HepG2 (cell line): ENCODE measurements at regions of chr10 and their contacts with region 1.

Region 1: DNA sequence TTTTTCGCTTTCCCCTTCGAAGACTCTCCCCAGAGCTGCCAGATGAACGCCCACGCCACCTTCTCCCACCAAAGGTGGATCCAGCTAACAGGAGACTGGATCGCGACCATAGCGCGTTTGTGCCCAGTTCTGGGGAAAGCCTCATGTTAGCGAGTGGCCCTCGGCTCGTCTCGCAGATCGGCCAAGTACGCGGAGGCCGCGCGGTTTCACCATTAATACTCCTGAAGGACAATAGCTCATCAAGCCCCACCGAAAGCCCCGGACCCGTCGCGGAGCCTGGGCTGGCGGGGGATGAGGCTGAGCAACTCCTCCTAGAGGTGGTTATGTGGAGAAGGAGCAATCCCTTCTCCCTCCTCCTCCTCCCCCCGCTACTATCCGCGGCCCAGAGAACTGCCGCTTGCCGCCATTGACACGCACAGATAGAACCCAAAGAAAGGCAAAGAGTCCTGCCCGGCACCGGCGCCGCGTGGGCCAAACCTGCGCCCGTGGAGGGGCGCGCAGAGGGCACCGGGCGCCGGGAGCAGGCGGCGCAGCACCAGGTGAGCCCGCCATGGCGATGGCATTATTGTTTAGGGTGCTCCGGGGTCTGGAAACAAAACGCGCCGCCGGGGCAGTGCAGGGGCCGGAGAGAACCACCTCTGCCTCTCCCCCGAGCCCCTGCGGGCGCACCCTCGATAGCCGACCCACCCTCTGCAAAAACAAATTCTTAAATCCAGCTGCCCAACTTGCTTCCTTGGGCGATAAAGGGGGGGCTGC is at the start of gene MACROH2A2:
- DNase-seq: peak; percentile 63
- ATAC-seq: peak; percentile 90
- H3K4me3 ChIP-seq: peak within 1 kb of the TSS; percentile 85 to 87 (median 85)
- H3K27ac ChIP-seq: peak within 1 kb of the TSS; percentile 75
- H3K4me1 ChIP-seq: peaks cover 33% of the 10 kb centered on the region
- H3K27me3 ChIP-seq: no peaks in the 10 kb centered on the region
- CTCF ChIP-seq: peak; percentile 73
- EP300 ChIP-seq: no peak
- POLR2A ChIP-seq: peak; percentile 19 to 47; a peak in 2 of 4 replicates
- RAD21 ChIP-seq: no peak
- total RNA-seq, gene MACROH2A2: 41.6 and 43.1 TPM in 2 replicates

Region 2: DNA sequence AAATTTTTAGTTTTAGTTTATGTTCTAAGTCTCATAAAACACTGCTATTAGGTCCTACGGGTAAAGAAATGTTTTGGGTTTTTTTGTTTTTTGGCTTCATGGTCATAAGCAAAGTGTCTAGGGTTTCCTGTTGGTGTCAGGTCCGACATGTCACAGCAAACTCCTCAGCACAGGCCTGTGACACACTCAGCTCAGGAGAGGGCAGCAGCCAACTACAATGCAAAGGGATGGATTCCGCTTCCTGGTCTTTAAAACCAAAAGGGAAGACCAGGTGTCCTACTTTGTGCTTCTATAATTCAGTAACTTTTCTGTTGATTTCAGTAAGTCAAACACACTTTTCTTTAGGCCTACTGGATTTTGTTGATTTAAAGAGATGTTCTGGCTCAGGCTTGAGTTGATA is 83.8 kb before region 1 on chr10:
- CTCF ChIA-PET with region 1: no interaction called
- POLR2A ChIA-PET with region 1: no interaction called
- in situ Hi-C with region 1: no loop called
- intact Hi-C with region 1: loop called (anchors 2 kb)
- DNase-seq: peak; percentile 57
- ATAC-seq: peak; percentile 95
- H3K4me3 ChIP-seq: no peak overlapping the region
- H3K27ac ChIP-seq: no peak overlapping the region
- H3K4me1 ChIP-seq: peaks cover 6% of the 10 kb centered on the region; the same call in 1 of the 2 replicates
- H3K27me3 ChIP-seq: peaks cover 7 to 55% of the 10 kb centered on the region in 2 experiments; a peak in 3 of 5 replicates
- CTCF ChIP-seq: peak; percentile 86
- EP300 ChIP-seq: no peak
- POLR2A ChIP-seq: no peak
- RAD21 ChIP-seq: no peak; the same call in 1 of the 2 replicates

Region 3: GRCh38 chr10:70090013-70090412 is 37.4 kb after region 1 on chr10:
- CTCF ChIA-PET with region 1: no interaction called
- POLR2A ChIA-PET with region 1: interaction called, 8 read pairs
- in situ Hi-C with region 1: no loop called
- intact Hi-C with region 1: loop called (anchors 5 kb)
- DNase-seq: no peak
- ATAC-seq: no peak
- H3K4me3 ChIP-seq: no peak overlapping the region
- H3K27ac ChIP-seq: peak overlapping the region; percentile 79
- H3K4me1 ChIP-seq: peaks cover 97% of the 10 kb centered on the region
- H3K27me3 ChIP-seq: no peaks in the 10 kb centered on the region
- CTCF ChIP-seq: no peak
- EP300 ChIP-seq: no peak
- POLR2A ChIP-seq: no peak
- RAD21 ChIP-seq: no peak